ENCODE measurements at regions of chr17 and their contacts with region 1.

Region 1: GRCh38 chr17:31524926-31525800 is 133.7 kb downstream of the RAB11FIP4 start:
- DNase-seq: peak; percentile 87 to 96
- ATAC-seq: peak; percentile 81 to 95
- H3K4me3 ChIP-seq: peak overlapping the region; percentile 39
- H3K27ac ChIP-seq: peak overlapping the region; percentile 34 to 62; a peak in 3 of 6 replicates
- H3K4me1 ChIP-seq: no peaks in the 10 kb centered on the region
- CTCF ChIP-seq: peak; percentile 97
- EP300 ChIP-seq: no peak
- POLR2A ChIP-seq: no peak
- RAD21 ChIP-seq: peak; percentile 97

Region 2: DNA sequence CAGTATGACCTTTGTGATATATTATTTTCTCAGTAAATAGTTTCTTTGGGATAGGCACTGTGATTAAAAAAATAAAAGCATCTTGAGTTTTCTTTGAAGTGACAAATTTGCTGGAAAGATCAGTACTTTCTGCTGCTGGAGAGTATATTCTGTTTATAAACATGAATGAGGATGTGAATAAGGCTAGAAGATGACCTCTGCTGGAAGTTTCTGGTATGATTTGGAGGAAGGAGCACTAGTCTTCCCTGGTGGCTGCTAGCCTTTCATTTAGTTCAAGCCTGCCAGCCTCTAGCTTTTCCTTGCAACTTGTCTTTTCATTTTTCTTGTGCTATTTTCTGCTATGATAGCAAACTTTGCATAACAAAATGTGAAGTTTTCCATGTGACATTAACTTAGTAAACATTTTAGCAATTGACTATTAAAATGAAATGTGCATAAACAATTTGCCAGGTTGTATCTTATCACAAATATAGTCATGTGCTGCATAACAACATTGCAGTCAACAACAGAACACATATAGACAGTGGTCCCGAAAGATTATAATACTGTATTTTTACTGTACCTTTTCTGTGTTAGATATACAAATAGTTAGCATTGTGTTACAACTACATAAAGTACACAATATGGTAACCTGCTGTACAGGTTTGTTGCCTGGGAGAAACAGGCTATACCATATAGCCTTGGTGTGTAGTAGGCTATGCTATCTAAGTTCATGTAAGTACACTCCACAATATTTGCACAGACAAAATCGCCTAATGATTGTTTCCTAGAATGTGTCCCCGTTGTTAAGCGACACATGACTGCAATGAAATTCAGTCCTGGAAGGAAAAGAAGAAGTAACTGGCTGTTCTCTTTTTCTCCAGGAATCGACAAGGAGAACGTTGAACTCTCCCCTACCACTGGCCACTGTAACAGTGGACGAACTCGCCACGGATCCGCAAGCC is 151.7 kb before region 1 on chr17:
- CTCF ChIA-PET with region 1: interaction called, 22 read pairs
- POLR2A ChIA-PET with region 1: no interaction called
- DNase-seq: peak in 1 of 2 experiments; percentile 72
- ATAC-seq: peak; percentile 96 to 98
- H3K4me3 ChIP-seq: no peak overlapping the region
- H3K27ac ChIP-seq: no peak overlapping the region
- H3K4me1 ChIP-seq: 0 out of 3 replicates have a peak, but pooled peaks cover 4% of the 10 kb centered on the region
- CTCF ChIP-seq: peak; percentile 76
- EP300 ChIP-seq: no peak
- POLR2A ChIP-seq: no peak
- RAD21 ChIP-seq: peak; percentile 69 to 77

Region 3: GRCh38 chr17:31398381-31399311 is 126.5 kb before region 1 on chr17:
- CTCF ChIA-PET with region 1: interaction called, 197 read pairs
- POLR2A ChIA-PET with region 1: no interaction called
- DNase-seq: no peak
- ATAC-seq: peak; percentile 7 to 20; a peak in 2 of 6 replicates
- H3K4me3 ChIP-seq: no peak overlapping the region
- H3K27ac ChIP-seq: no peak overlapping the region
- H3K4me1 ChIP-seq: no peaks in the 10 kb centered on the region
- CTCF ChIP-seq: no peak
- EP300 ChIP-seq: no peak
- POLR2A ChIP-seq: no peak
- RAD21 ChIP-seq: no peak

Region 4: DNA sequence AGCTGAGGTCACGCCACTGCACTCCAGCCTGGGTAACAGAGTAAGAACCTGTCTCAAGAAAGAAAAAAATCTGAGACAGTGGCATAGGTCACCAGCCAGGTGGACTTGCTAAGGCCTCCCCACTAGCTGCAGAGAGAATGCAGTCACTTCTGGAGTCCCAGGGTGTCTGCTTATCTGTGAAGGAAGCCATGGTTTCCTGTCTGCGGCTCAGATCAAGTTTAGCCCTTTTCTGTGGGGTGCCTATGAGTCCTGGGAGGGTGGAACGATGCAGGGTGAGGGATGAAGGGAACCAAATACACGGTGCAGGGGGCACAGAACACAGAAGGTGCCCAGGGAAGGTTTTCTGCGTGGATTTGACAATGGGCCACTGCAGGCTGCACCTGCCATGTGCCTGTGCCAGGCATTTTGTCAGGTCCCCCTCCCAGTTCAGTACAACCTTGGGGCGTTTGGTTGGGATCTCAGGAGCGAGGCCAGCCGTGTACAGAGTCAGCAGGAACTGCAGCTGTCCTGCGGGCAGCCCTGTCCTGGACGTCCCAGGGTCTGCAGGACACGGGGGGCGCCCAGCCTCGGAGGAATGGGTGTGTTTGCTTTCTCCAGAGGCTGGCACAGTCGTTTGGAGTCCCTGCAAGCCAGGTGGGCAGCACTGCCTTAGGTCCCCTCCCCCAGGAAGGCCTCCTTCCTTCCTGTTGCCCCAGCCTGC is 91.9 kb before region 1 on chr17:
- CTCF ChIA-PET with region 1: interaction called, 490 read pairs
- POLR2A ChIA-PET with region 1: no interaction called
- DNase-seq: no peak
- ATAC-seq: no peak
- H3K4me3 ChIP-seq: no peak overlapping the region
- H3K27ac ChIP-seq: no peak overlapping the region
- H3K4me1 ChIP-seq: no peaks in the 10 kb centered on the region
- CTCF ChIP-seq: no peak
- EP300 ChIP-seq: no peak
- POLR2A ChIP-seq: no peak
- RAD21 ChIP-seq: no peak

Region 5: GRCh38 chr17:31475378-31476162 is 49.6 kb before region 1 on chr17:
- CTCF ChIA-PET with region 1: interaction called, 20 read pairs
- POLR2A ChIA-PET with region 1: no interaction called
- DNase-seq: no peak
- ATAC-seq: no peak
- H3K4me3 ChIP-seq: no peak overlapping the region
- H3K27ac ChIP-seq: no peak overlapping the region
- H3K4me1 ChIP-seq: no peaks in the 10 kb centered on the region
- CTCF ChIP-seq: no peak
- EP300 ChIP-seq: no peak
- POLR2A ChIP-seq: no peak
- RAD21 ChIP-seq: no peak

Region 6: DNA sequence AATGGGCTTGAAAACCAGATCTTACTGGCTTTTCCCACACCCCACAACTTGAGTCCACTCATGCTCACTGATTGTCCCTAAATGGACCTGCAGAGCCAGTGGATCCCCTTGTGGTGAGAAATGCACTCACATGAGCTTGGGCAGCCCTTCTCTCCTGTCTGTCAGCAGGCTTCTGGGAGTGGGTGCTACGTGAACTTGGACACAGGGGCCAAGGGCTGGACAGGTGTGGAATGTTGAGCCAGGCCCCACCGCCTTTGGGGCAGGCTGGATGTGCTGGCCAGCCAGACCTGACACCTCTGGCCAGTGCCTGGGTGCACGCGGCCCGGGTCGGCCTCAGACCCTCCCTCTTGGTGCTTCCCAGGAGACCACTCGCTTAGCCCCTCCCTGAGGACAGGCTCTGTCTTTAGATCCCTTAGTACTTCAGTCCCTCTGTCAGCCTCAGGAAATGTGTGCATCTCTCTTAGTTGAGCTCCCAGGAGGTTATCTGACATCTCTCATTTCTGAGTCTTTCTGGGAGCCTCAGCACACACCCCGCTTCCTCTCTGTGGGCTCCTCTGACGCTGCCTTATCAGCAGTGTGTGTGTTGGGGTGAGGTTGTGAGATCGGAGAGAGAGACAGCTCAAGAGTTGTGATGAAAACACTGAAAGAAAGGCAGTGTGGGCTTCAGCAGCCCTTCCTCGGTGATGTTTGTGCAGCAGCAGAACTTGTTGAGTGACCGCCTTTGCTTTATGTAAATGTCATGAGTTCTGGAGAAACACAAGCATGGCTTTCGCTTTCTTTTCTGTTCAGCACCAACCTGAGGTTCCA is 16.7 kb before region 1 on chr17:
- CTCF ChIA-PET with region 1: interaction called, 172 read pairs
- POLR2A ChIA-PET with region 1: no interaction called
- DNase-seq: peak; percentile 31 to 41
- ATAC-seq: peak; percentile 56 to 82; a peak in 4 of 6 replicates
- H3K4me3 ChIP-seq: no peak overlapping the region
- H3K27ac ChIP-seq: no peak overlapping the region
- H3K4me1 ChIP-seq: no peaks in the 10 kb centered on the region
- CTCF ChIP-seq: no peak
- EP300 ChIP-seq: no peak
- POLR2A ChIP-seq: no peak
- RAD21 ChIP-seq: no peak

Region 7: DNA sequence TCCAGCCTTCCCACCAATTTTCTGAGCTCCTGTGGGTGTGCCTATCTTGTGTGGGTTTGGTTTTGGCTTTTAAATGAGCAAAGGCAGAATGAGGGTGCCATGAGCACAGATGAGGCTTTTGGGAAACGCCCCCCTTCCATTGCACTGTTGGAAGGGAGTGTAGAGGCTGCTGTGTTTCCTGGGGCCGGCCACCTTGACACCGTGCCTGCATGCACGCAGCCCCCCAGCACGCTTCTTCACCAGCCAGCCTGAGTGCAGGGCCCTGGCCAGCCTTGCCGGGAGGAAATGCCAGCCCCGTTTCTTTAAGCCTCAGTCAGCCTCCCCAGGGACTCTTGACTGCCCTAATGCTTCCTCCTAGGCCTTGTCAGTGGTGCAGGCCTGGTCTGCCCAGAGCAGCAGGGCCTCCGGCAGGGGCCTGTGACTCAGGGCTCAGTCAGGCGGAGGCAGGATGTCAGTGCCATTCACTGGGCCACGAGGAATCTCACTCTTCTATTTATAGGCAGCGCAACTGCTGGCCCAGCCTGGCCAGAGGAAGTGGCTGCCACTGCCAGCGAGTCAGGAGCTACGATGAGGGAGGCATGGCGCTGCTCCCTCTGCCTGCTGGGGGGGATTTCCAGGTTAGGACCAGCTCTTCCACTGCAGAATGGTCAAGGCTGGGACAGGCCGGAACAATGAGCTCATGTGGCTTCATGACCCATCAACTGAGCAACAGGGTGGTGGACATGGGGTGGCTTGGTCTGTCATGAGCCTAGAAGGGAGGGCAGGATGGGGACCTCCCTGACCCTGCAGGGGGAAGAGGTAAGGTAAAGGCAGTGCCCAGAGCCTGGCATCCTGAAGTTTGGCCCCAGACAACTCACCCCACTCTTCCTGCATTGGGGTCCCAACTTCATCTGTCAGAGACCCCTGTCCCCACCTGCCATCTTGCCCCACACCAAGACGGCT is 71.5 kb after region 1 on chr17:
- CTCF ChIA-PET with region 1: no interaction called
- POLR2A ChIA-PET with region 1: no interaction called
- DNase-seq: peak; percentile 86 to 87
- ATAC-seq: peak; percentile 92 to 95
- H3K4me3 ChIP-seq: no peak overlapping the region
- H3K27ac ChIP-seq: peak overlapping the region; percentile 49 to 83; a peak in 5 of 6 replicates
- H3K4me1 ChIP-seq: peaks cover 38% of the 10 kb centered on the region
- CTCF ChIP-seq: no peak
- EP300 ChIP-seq: no peak
- POLR2A ChIP-seq: 0 out of 2 replicates have a peak, but pooled peaks have one; percentile 11
- RAD21 ChIP-seq: peak in 1 of 2 experiments; percentile 12; a peak in 1 of 5 replicates

Region 8: GRCh38 chr17:31645351-31645750 is 120.2 kb after region 1 on chr17:
- CTCF ChIA-PET with region 1: no interaction called
- POLR2A ChIA-PET with region 1: no interaction called
- DNase-seq: no peak
- ATAC-seq: no peak
- H3K4me3 ChIP-seq: no peak overlapping the region
- H3K27ac ChIP-seq: no peak overlapping the region
- H3K4me1 ChIP-seq: no peaks in the 10 kb centered on the region
- CTCF ChIP-seq: no peak
- EP300 ChIP-seq: no peak
- POLR2A ChIP-seq: no peak
- RAD21 ChIP-seq: no peak

Region 9: GRCh38 chr17:32396343-32396742 is 871.2 kb after region 1 on chr17:
- CTCF ChIA-PET with region 1: no interaction called
- POLR2A ChIA-PET with region 1: no interaction called
- DNase-seq: no peak
- ATAC-seq: peak; percentile 39 to 60; a peak in 3 of 6 replicates
- H3K4me3 ChIP-seq: no peak overlapping the region
- H3K27ac ChIP-seq: no peak overlapping the region
- H3K4me1 ChIP-seq: 0 out of 3 replicates have a peak, but pooled peaks cover 4% of the 10 kb centered on the region
- CTCF ChIP-seq: no peak
- EP300 ChIP-seq: no peak
- POLR2A ChIP-seq: no peak
- RAD21 ChIP-seq: no peak